Natural killer cell (primary cell): ENCODE measurements at regions of chr9 and their contacts with region 1.

Region 1: DNA sequence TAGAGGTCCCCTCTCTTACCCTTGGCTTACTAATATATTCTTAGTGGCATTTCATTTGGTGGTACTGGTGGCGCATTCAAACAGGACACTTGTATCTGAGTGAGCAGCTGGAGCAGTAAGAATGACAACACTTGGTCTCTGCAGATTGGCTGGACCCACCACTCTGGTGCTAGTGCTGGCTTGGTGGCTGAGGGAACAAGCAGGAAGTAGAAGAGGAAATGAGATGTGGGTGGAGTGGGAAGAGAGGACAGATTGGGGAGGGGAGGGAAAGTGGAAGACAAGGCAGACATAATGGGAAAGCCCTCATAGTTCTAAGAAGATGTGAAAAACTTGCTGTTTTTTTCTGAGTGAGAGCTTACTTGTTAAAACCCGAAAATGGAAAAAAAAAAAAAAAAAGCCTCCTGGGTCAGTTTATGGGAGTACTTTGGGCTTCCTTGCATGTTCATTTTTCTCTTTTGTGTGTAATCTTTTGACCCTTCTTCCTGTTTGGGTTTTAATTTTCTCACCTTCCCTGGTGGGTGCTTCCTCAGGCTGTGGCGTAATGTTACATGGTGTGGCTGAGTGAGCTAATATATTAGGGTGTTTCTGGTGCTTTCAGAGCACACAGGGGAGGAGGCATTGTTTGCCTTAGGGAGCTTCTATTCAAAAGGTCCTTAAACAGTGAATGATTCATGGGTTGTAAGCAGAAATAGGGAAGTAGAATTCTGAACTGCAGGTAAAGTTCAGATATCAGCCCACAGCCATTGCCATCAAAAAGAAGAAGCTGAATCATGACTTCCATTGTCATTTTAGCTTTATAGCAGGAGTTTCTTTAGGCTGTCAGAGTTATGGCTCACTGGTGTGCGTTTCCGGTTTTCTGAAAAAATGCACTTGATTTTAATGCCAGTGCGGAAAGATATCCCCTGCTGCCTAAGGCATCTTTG is 52.3 kb downstream of the TLE4 start:
- DNase-seq: peak; percentile 48 to 77
- ATAC-seq: peak; percentile 89 to 95 (median 93)
- H3K4me3 ChIP-seq: peak overlapping the region; percentile 6
- H3K4me3 Mint-ChIP-seq: peak overlapping the region; percentile 84
- H3K27ac ChIP-seq: peak overlapping the region; percentile 64
- H3K27ac Mint-ChIP-seq: peak overlapping the region; percentile 88 to 93
- H3K4me1 ChIP-seq: peaks cover 17% of the 10 kb centered on the region
- H3K4me1 Mint-ChIP-seq: peaks cover 69 to 74% of the 10 kb centered on the region in 2 donors
- H3K27me3 ChIP-seq: no peaks in the 10 kb centered on the region
- H3K27me3 Mint-ChIP-seq: no peaks in the 10 kb centered on the region
- CTCF ChIP-seq: no peak

Region 2: GRCh38 chr9:79571309-79572031 is 52.6 kb before region 1 on chr9 and contains the start of gene TLE4:
- intact Hi-C with region 1: loop called (anchors 1 kb)
- DNase-seq: peak; percentile 100
- ATAC-seq: peak; percentile 82 to 93 (median 85)
- H3K4me3 ChIP-seq: peak within 1 kb of the TSS; percentile 88
- H3K4me3 Mint-ChIP-seq: peak within 1 kb of the TSS; percentile 67
- H3K27ac ChIP-seq: peak within 1 kb of the TSS; percentile 91
- H3K27ac Mint-ChIP-seq: no peak within 1 kb of the TSS
- H3K4me1 ChIP-seq: peaks cover 14% of the 10 kb centered on the region
- H3K4me1 Mint-ChIP-seq: peaks cover 36 to 37% of the 10 kb centered on the region in 2 donors
- H3K27me3 ChIP-seq: peaks cover 7% of the 10 kb centered on the region
- H3K27me3 Mint-ChIP-seq: peaks cover 4 to 10% of the 10 kb centered on the region in 2 donors
- CTCF ChIP-seq: no peak
- total RNA-seq, gene TLE4: 214 to 240 (median 220) TPM

Region 3: DNA sequence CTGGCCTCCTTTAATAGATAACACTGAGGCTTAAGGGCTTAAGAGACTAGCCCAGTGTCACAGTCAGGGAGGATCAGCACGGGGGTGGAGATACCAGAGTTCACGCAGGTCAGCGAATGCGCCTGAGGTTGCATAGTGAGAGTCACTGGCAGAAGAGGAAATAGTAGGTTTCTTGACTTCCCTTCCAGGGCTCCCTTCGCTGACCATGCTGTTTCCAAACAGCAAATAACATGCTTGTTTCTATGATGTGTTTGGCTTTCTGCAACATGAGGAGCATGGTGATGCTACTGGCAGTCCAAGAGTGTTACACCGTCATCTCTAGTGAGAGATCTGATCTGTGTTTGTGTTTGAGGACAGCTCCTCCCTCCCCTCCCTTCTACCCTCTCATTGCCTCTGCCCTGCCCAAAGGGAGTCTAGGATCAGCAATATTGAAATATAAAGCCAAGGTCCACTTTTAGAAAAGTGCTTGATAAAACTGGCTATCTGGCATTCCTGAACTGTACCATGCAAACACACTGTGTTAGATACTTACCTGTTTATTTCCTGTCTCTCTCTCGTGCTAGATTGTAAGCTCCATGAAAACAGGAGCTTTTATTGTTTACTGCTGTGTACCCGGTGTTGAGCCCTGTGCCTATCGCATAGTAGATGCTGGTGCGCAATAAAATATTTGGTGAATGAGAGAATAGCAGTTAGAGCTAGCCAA is 40.0 kb before region 1 on chr9:
- intact Hi-C with region 1: loop called (anchors 1 kb)
- DNase-seq: peak; percentile 33 to 45
- ATAC-seq: peak; percentile 86 to 92 (median 88)
- H3K4me3 ChIP-seq: no peak overlapping the region
- H3K4me3 Mint-ChIP-seq: peak overlapping the region; percentile 59
- H3K27ac ChIP-seq: peak overlapping the region; percentile 16
- H3K27ac Mint-ChIP-seq: peak overlapping the region; percentile 64 to 76
- H3K4me1 ChIP-seq: peaks cover 29% of the 10 kb centered on the region
- H3K4me1 Mint-ChIP-seq: peaks cover 78 to 81% of the 10 kb centered on the region in 2 donors
- H3K27me3 ChIP-seq: no peaks in the 10 kb centered on the region
- H3K27me3 Mint-ChIP-seq: no peaks in the 10 kb centered on the region
- CTCF ChIP-seq: no peak

Region 4: DNA sequence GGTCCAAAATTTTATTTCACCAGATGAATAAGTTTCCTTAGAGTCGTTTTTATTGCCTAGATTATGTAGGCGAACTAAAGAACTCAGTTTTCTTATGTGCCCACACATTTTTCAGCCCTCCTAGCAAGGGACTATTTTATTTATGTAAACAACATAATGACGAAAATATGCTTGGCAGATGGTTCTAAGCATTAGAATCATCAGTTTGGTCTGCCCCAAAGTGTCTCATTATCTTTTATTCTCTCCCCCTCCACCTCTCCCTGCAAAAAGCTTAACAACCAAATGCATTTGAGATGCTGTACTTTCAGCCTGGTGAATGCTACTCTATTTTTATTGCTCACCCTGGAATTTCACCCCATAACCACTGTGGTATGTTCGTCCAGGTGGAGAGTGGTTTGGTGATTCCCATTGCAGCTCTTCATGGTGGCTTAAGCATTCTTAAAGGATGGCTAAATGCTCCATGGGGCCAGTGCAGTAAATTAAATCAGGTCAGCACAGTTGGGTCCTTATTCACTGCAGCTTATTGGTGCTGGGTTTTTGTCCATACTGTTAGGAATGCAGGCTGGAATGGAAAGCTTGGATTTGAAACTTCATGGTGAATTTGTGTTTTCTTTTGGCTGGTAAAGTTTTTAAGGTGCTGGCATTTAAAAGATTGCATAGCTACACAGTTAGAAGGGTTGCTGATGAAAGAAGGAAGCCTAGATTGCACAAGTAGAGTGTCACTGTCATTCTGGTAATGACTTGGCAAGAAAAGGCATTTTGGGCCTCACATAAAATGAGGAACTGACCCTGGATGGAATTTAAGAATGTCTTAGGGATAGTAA is 13.1 kb before region 1 on chr9:
- intact Hi-C with region 1: loop called (anchors 1 kb)
- DNase-seq: no peak
- ATAC-seq: peak in 1 of 3 donors; percentile 71
- H3K4me3 ChIP-seq: no peak overlapping the region
- H3K4me3 Mint-ChIP-seq: no peak overlapping the region
- H3K27ac ChIP-seq: peak overlapping the region; percentile 22
- H3K27ac Mint-ChIP-seq: no peak overlapping the region
- H3K4me1 ChIP-seq: no peaks in the 10 kb centered on the region
- H3K4me1 Mint-ChIP-seq: peaks cover 55 to 75% of the 10 kb centered on the region in 2 donors
- H3K27me3 ChIP-seq: no peaks in the 10 kb centered on the region
- H3K27me3 Mint-ChIP-seq: no peaks in the 10 kb centered on the region
- CTCF ChIP-seq: no peak

Region 5: DNA sequence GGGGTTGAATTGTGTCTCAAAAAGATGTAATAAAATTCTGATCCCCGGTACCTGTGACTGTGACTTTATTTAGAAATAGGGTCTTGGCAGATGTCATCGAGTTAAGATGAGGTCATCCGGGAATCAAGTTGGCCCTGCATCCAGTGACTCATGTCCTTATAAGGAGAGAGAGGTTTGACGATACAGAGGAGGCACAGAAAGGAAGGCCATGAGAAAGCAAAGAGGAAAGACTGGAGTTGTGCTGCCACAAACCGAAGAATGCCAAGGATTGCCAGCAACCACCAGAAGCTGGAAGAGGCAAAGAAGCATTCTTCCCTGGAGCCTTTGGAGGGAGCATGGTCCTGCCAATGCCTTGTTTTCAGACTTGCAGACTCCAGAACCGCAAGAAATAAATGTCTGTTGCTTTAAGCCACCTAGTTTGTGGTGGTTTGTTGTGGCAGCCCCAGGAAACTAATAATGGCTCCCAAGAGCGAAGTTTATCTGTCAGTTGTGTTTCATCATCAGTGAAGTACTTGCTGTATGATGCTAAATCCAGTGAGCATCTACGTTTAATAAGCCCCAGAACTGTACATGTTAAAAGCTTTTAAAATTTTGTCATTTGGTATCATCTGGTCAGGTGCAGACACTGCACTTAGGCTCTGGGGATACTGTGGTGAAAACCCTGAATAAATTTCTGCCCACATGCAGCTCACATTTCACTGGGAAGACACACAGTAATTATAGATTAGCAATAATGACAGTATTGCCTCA is 62.5 kb after region 1 on chr9:
- intact Hi-C with region 1: loop called (anchors 2 kb)
- DNase-seq: no peak
- ATAC-seq: peak; percentile 27 to 33 (median 30)
- H3K4me3 ChIP-seq: no peak overlapping the region
- H3K4me3 Mint-ChIP-seq: peak overlapping the region; percentile 80
- H3K27ac ChIP-seq: no peak overlapping the region
- H3K27ac Mint-ChIP-seq: peak overlapping the region; percentile 82 to 84
- H3K4me1 ChIP-seq: peaks cover 15% of the 10 kb centered on the region
- H3K4me1 Mint-ChIP-seq: peaks cover 55 to 61% of the 10 kb centered on the region in 2 donors
- H3K27me3 ChIP-seq: no peaks in the 10 kb centered on the region
- H3K27me3 Mint-ChIP-seq: no peaks in the 10 kb centered on the region
- CTCF ChIP-seq: no peak

Region 6: GRCh38 chr9:79694676-79695400 is 70.8 kb after region 1 on chr9:
- intact Hi-C with region 1: loop called (anchors 2 kb)
- DNase-seq: no peak
- ATAC-seq: no peak
- H3K4me3 ChIP-seq: no peak overlapping the region
- H3K4me3 Mint-ChIP-seq: peak overlapping the region; percentile 73
- H3K27ac ChIP-seq: no peak overlapping the region
- H3K27ac Mint-ChIP-seq: peak overlapping the region; percentile 50 to 62
- H3K4me1 ChIP-seq: peaks cover 13% of the 10 kb centered on the region
- H3K4me1 Mint-ChIP-seq: peaks cover 68 to 73% of the 10 kb centered on the region in 2 donors
- H3K27me3 ChIP-seq: no peaks in the 10 kb centered on the region
- H3K27me3 Mint-ChIP-seq: no peaks in the 10 kb centered on the region
- CTCF ChIP-seq: no peak